Right cardiac atrium (tissue), 5 donors: ENCODE measurements at regions of chr16 and their contacts with region 1.

Region 1: DNA sequence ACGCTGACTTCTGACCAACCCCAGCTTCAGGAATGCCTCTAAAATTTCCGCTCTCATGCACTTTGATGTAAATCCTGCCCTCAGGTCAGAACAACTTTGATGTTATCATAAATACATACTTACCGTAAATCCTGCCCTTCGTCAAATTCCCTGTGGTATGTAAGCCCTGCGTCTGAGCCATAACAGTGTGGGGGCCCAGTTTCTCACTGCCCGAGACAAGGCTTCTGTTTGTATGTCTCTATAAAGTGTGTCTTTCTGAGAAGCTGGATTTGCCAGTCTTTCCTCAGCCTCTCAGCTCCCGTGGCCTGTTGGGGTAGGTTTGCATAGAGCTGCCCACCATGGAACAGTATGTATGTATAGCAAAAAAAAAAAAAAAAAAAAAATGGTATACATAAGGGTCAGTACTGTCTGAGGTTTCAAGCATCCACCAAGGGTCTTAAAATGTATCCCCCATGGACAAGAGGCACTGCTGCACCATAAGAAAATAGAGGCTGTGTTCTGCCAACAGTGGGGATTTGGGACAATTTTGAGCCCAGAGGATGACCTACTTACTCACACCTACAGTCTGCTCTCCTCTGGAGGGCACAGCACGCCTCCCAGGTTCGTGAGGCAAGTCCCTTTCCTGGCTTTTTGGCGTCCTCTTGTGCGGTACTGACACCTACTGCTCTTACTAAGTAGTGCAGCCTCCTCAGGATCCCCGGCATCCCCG is 17.5 kb downstream of the PRMT7 start:
- DNase-seq: peak; percentile 66 to 87 (median 84)
- ATAC-seq: peak; percentile 90 to 94
- H3K4me3 ChIP-seq: no peak overlapping the region
- H3K27ac ChIP-seq: no peak overlapping the region
- H3K4me1 ChIP-seq: no peaks in the 10 kb centered on the region
- H3K27me3 ChIP-seq: no peaks in the 10 kb centered on the region

Region 2: DNA sequence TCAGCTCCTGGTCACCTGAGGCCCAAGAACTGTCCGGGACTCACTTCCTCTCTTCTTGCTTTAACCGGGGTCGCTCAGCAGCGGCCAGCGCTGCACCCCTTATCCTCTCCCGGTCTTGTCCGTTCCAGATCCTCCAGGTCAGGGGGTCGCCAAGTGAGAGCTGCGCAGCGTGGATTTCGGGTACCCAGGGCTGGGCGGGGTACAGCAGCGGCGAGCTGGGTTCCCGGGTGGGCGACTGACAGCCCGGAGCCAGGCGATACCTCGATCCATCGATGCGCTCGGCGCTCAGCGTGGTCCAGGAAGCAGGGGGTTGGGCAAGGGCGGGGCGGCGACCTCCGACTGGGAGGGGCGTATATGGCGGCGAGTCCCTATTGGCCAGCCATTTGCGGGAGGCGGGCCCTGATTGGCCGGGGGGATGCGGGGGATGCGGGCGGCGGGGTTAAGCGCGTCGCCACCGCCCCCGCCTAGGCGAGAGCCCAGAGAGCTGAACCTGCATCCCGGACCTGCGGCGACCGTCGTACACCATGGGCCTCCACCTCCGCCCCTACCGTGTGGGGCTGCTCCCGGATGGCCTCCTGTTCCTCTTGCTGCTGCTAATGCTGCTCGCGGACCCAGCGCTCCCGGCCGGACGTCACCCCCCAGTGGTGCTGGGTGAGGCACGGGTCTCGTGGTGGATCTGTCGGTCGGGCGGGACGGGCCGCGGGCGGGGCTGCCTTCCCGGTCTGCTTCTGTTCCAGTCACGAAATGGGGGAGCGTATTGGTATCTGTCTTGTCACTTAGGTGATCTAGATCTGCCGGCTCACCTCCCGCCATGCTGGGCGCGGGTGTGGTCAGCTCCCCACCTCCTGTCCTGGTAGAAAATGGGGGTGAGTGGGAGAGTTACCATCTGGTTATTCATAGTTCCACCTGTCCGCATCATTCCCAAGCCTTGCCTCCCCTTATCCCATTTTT is 83.1 kb before region 1 on chr16 and contains the start of gene PLA2G15:
- intact Hi-C with region 1: loop called in 3 of 4 experiments (anchors 5 kb)
- DNase-seq: peak; percentile 97 to 99 (median 99)
- ATAC-seq: peak; percentile 97
- H3K4me3 ChIP-seq: peak within 1 kb of the TSS; percentile 68
- H3K27ac ChIP-seq: peak within 1 kb of the TSS; percentile 67
- H3K4me1 ChIP-seq: peaks cover 19% of the 10 kb centered on the region
- H3K27me3 ChIP-seq: no peaks in the 10 kb centered on the region
- total RNA-seq, gene PLA2G15: 20.2 to 30.8 (median 28.7) TPM

Region 3: GRCh38 chr16:68264128-68265077 is 63.9 kb before region 1 on chr16 and contains the start of gene SLC7A6:
- intact Hi-C with region 1: loop called (anchors 1 to 5 kb)
- DNase-seq: peak; percentile 81 to 91 (median 91)
- ATAC-seq: peak; percentile 82
- H3K4me3 ChIP-seq: peak within 1 kb of the TSS; percentile 70
- H3K27ac ChIP-seq: peak within 1 kb of the TSS; percentile 87
- H3K4me1 ChIP-seq: no peaks in the 10 kb centered on the region
- H3K27me3 ChIP-seq: no peaks in the 10 kb centered on the region
- total RNA-seq, gene SLC7A6: 39.0 to 60.7 (median 51.3) TPM

Region 4: GRCh38 chr16:69157196-69157595 is 828.9 kb after region 1 on chr16:
- intact Hi-C with region 1: no loop called
- DNase-seq: no peak
- ATAC-seq: no peak
- H3K4me3 ChIP-seq: no peak overlapping the region
- H3K27ac ChIP-seq: no peak overlapping the region
- H3K4me1 ChIP-seq: no peaks in the 10 kb centered on the region
- H3K27me3 ChIP-seq: no peaks in the 10 kb centered on the region